Activated CD8-positive, alpha-beta T cell treated with anti-CD3 and anti-CD28 coated beads for 36 hours (primary cell): ENCODE measurements at regions of chr11 and their contacts with region 1.

Region 1: GRCh38 chr11:118046051-118046963 is 30.6 kb upstream of the TMPRSS4 start:
- DNase-seq: peak; percentile 68
- ATAC-seq: peak; percentile 79
- H3K4me3 Mint-ChIP-seq: peak overlapping the region; percentile 52
- H3K27ac Mint-ChIP-seq: peak overlapping the region; percentile 92
- H3K4me1 Mint-ChIP-seq: peaks cover 89% of the 10 kb centered on the region
- H3K27me3 Mint-ChIP-seq: no peaks in the 10 kb centered on the region
- CTCF ChIP-seq: no peak

Region 2: GRCh38 chr11:117985953-117986887 is 60.1 kb before region 1 on chr11 and contains the start of gene IL10RA:
- CTCF ChIA-PET with region 1: interaction called, 56 read pairs
- POLR2A ChIA-PET with region 1: interaction called, 62 read pairs
- intact Hi-C with region 1: loop called (anchors 1 kb)
- DNase-seq: peak; percentile 89
- ATAC-seq: peak; percentile 85
- H3K4me3 Mint-ChIP-seq: peak within 1 kb of the TSS; percentile 80
- H3K27ac Mint-ChIP-seq: peak within 1 kb of the TSS; percentile 97
- H3K4me1 Mint-ChIP-seq: peaks cover 74% of the 10 kb centered on the region
- H3K27me3 Mint-ChIP-seq: no peaks in the 10 kb centered on the region
- CTCF ChIP-seq: no peak
- total RNA-seq, gene IL10RA: 73.3 to 80.9 TPM

Region 3: GRCh38 chr11:118012083-118012669 is 34.1 kb before region 1 on chr11:
- CTCF ChIA-PET with region 1: interaction called, 6 read pairs
- POLR2A ChIA-PET with region 1: interaction called, 15 read pairs
- intact Hi-C with region 1: no loop called
- DNase-seq: peak; percentile 48
- ATAC-seq: peak; percentile 54
- H3K4me3 Mint-ChIP-seq: no peak overlapping the region
- H3K27ac Mint-ChIP-seq: peak overlapping the region; percentile 74
- H3K4me1 Mint-ChIP-seq: peaks cover 96% of the 10 kb centered on the region
- H3K27me3 Mint-ChIP-seq: no peaks in the 10 kb centered on the region
- CTCF ChIP-seq: no peak

Region 4: GRCh38 chr11:118033443-118033842 is 12.9 kb before region 1 on chr11:
- CTCF ChIA-PET with region 1: no interaction called
- POLR2A ChIA-PET with region 1: interaction called, 13 read pairs
- intact Hi-C with region 1: no loop called
- DNase-seq: no peak
- ATAC-seq: peak; percentile 49
- H3K4me3 Mint-ChIP-seq: no peak overlapping the region
- H3K27ac Mint-ChIP-seq: peak overlapping the region; percentile 74
- H3K4me1 Mint-ChIP-seq: peaks cover 33% of the 10 kb centered on the region
- H3K27me3 Mint-ChIP-seq: no peaks in the 10 kb centered on the region
- CTCF ChIP-seq: no peak

Region 5: DNA sequence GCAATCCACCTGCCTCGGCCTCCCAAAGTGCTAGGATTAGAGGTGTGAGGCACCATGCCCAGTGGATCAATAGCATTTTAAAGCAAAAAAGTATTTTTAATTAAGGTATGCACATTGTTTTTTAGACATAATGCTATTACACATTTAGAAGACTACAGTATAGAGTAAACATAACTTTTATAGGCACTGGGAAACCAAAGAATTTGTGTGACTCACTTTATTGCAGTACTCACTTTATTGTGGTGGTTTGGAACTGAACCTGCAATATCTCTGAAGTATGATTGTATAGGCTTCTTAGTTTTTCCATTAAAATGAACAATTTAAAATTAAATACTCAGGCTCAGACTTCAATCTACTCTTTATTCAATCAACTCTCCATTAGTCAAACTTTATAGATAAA is 240.7 kb after region 1 on chr11:
- CTCF ChIA-PET with region 1: no interaction called
- POLR2A ChIA-PET with region 1: no interaction called
- intact Hi-C with region 1: no loop called
- DNase-seq: no peak
- ATAC-seq: no peak
- H3K4me3 Mint-ChIP-seq: no peak overlapping the region
- H3K27ac Mint-ChIP-seq: no peak overlapping the region
- H3K4me1 Mint-ChIP-seq: peaks cover 53% of the 10 kb centered on the region
- H3K27me3 Mint-ChIP-seq: no peaks in the 10 kb centered on the region
- CTCF ChIP-seq: no peak